ENCODE measurements at regions of chr14 and their contacts with region 1.

Region 1: GRCh38 chr14:78566026-78566858 is 396.1 kb downstream of the NRXN3 start:
- DNase-seq: peak; percentile 78 to 84 (median 80)
- ATAC-seq: peak; percentile 93
- H3K4me3 ChIP-seq: no peak overlapping the region
- H3K27ac ChIP-seq: no peak overlapping the region
- H3K4me1 ChIP-seq: peaks cover 6% of the 10 kb centered on the region
- H3K27me3 ChIP-seq: no peaks in the 10 kb centered on the region
- CTCF ChIP-seq: peak; percentile 59 to 81 (median 71)
- POLR2A ChIP-seq: no peak

Region 2: GRCh38 chr14:77862154-77862786 is 704.0 kb before region 1 on chr14:
- intact Hi-C with region 1: loop called (anchors 10 kb)
- DNase-seq: peak; percentile 63 to 84 (median 72)
- ATAC-seq: no peak
- H3K4me3 ChIP-seq: no peak overlapping the region
- H3K27ac ChIP-seq: no peak overlapping the region
- H3K4me1 ChIP-seq: peaks cover 6% of the 10 kb centered on the region
- H3K27me3 ChIP-seq: no peaks in the 10 kb centered on the region
- CTCF ChIP-seq: peak; percentile 72 to 93 (median 85)
- POLR2A ChIP-seq: no peak